ENCODE measurements at regions of chr1 and their contacts with region 1.

Region 1: GRCh38 chr1:91929250-91929649 is 20.0 kb upstream of the BRDT start:
- DNase-seq: peak; percentile 6
- H3K4me3 ChIP-seq: no peak overlapping the region
- H3K27ac ChIP-seq: no peak overlapping the region
- H3K4me1 ChIP-seq: peaks cover 8% of the 10 kb centered on the region
- H3K27me3 ChIP-seq: no peaks in the 10 kb centered on the region

Region 2: GRCh38 chr1:91282695-91283420 is 646.4 kb before region 1 on chr1:
- in situ Hi-C with region 1: loop called (anchors 25 kb)
- DNase-seq: peak; percentile 79
- H3K4me3 ChIP-seq: peak overlapping the region; percentile 52
- H3K27ac ChIP-seq: no peak overlapping the region
- H3K4me1 ChIP-seq: no peaks in the 10 kb centered on the region
- H3K27me3 ChIP-seq: no peaks in the 10 kb centered on the region

Region 3: GRCh38 chr1:91515618-91516393 is 413.4 kb before region 1 on chr1:
- in situ Hi-C with region 1: loop called (anchors 5 kb)
- DNase-seq: no peak
- H3K4me3 ChIP-seq: no peak overlapping the region
- H3K27ac ChIP-seq: no peak overlapping the region
- H3K4me1 ChIP-seq: no peaks in the 10 kb centered on the region
- H3K27me3 ChIP-seq: no peaks in the 10 kb centered on the region